Common myeloid progenitor, CD34-positive (primary cell): ENCODE measurements at regions of chr17 and their contacts with region 1.

Region 1: GRCh38 chr17:74354123-74354522 is 7.5 kb downstream of the BTBD17 start:
- DNase-seq: peak; percentile 79 to 81 (median 81)
- H3K4me3 ChIP-seq: peak overlapping the region in 1 of 7 experiments; percentile 28
- H3K27ac ChIP-seq: no peak overlapping the region
- H3K4me1 ChIP-seq: peaks cover 0 to 31% (median 21%) of the 10 kb centered on the region in 4 experiments
- H3K27me3 ChIP-seq: peaks cover 0 to 91% (median 40%) of the 10 kb centered on the region in 5 experiments

Region 2: GRCh38 chr17:74332763-74333283 is 21.3 kb before region 1 on chr17:
- CTCF ChIA-PET with region 1: interaction called, 15 read pairs
- POLR2A ChIA-PET with region 1: interaction called, 4 read pairs
- DNase-seq: peak in 2 of 3 donors; percentile 79 to 84
- H3K4me3 ChIP-seq: peak overlapping the region in 1 of 7 experiments; percentile 4
- H3K27ac ChIP-seq: no peak overlapping the region
- H3K4me1 ChIP-seq: peaks cover 0 to 10% (median 7%) of the 10 kb centered on the region in 4 experiments
- H3K27me3 ChIP-seq: peaks cover 0 to 8% (median 3%) of the 10 kb centered on the region in 5 experiments